ENCODE measurements at regions of chr12 and their contacts with region 1.

Region 1: GRCh38 chr12:56117778-56118687 is at the start of gene ZC3H10:
- DNase-seq: peak; percentile 89 to 100 (median 94)
- ATAC-seq: peak; percentile 67
- H3K4me3 ChIP-seq: peak within 1 kb of the TSS; percentile 73
- H3K4me3 Mint-ChIP-seq: peak within 1 kb of the TSS; percentile 97
- H3K27ac ChIP-seq: peak within 1 kb of the TSS; percentile 75 to 90
- H3K27ac Mint-ChIP-seq: peak within 1 kb of the TSS; percentile 94
- H3K4me1 ChIP-seq: peaks cover 35% of the 10 kb centered on the region
- H3K4me1 Mint-ChIP-seq: peaks cover 33% of the 10 kb centered on the region
- H3K27me3 ChIP-seq: no peaks in the 10 kb centered on the region
- H3K27me3 Mint-ChIP-seq: no peaks in the 10 kb centered on the region
- CTCF ChIP-seq: peak; percentile 52
- total RNA-seq, gene ZC3H10: 6.3 to 8.9 TPM

Region 2: GRCh38 chr12:55817346-55818139 is 300.5 kb before region 1 on chr12 and contains the starts of genes ORMDL2 and SARNP:
- CTCF ChIA-PET with region 1: no interaction called
- POLR2A ChIA-PET with region 1: interaction called, 15 read pairs
- intact Hi-C with region 1: no loop called
- DNase-seq: peak; percentile 88 to 100 (median 92)
- ATAC-seq: peak; percentile 92
- H3K4me3 ChIP-seq: peak within 1 kb of the TSS; percentile 97
- H3K4me3 Mint-ChIP-seq: no peak within 1 kb of the TSS
- H3K27ac ChIP-seq: peak within 1 kb of the TSS; percentile 71 to 87
- H3K27ac Mint-ChIP-seq: no peak within 1 kb of the TSS
- H3K4me1 ChIP-seq: peaks cover 40% of the 10 kb centered on the region
- H3K4me1 Mint-ChIP-seq: peaks cover 28% of the 10 kb centered on the region
- H3K27me3 ChIP-seq: no peaks in the 10 kb centered on the region
- H3K27me3 Mint-ChIP-seq: no peaks in the 10 kb centered on the region
- CTCF ChIP-seq: no peak
- total RNA-seq, gene ORMDL2: 13.0 to 14.9 TPM
- total RNA-seq, gene SARNP: 38.2 to 38.6 TPM

Region 3: DNA sequence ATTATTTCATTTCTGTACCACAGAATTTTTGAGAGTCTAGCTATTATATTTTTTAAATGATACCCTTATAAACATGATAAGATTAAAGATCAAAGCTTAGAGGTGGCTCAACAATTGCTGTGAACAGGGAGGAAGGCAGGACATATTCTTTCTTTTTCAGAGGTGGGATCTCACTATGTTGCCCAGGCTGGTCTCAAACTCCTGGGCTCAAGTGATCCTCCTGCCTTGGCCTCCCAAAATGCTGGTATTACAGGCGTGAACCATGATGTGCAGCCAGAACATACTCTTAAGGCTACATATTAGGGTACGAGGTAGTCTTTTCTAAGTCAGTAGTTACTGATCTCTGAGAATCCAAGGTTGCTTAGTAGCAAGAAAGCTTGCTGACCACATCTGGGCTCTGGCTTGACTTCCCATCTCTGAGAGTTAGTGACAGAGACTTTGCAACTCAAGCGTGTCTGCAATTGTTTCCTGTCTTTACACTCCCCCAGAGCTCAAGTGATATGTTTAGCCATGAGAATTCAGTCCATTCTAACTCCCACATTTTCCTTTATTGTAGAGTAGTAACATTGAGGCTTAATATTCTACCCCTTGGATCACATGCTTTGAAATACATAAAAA is 135.6 kb before region 1 on chr12:
- CTCF ChIA-PET with region 1: no interaction called
- POLR2A ChIA-PET with region 1: no interaction called
- intact Hi-C with region 1: no loop called
- DNase-seq: no peak
- ATAC-seq: no peak
- H3K4me3 ChIP-seq: no peak overlapping the region
- H3K4me3 Mint-ChIP-seq: no peak overlapping the region
- H3K27ac ChIP-seq: no peak overlapping the region
- H3K27ac Mint-ChIP-seq: no peak overlapping the region
- H3K4me1 ChIP-seq: no peaks in the 10 kb centered on the region
- H3K4me1 Mint-ChIP-seq: peaks cover 30% of the 10 kb centered on the region
- H3K27me3 ChIP-seq: no peaks in the 10 kb centered on the region
- H3K27me3 Mint-ChIP-seq: no peaks in the 10 kb centered on the region
- CTCF ChIP-seq: no peak

Region 4: GRCh38 chr12:56041552-56042429 is 76.2 kb before region 1 on chr12 and contains the start of gene RPS26:
- CTCF ChIA-PET with region 1: interaction called, 19 read pairs
- POLR2A ChIA-PET with region 1: interaction called, 29 read pairs
- intact Hi-C with region 1: loop called (anchors 2 kb)
- DNase-seq: peak; percentile 81 to 99 (median 89)
- ATAC-seq: peak; percentile 92
- H3K4me3 ChIP-seq: peak within 1 kb of the TSS; percentile 95
- H3K4me3 Mint-ChIP-seq: peak within 1 kb of the TSS; percentile 94
- H3K27ac ChIP-seq: peak within 1 kb of the TSS; percentile 88 to 90
- H3K27ac Mint-ChIP-seq: peak within 1 kb of the TSS; percentile 86
- H3K4me1 ChIP-seq: peaks cover 32% of the 10 kb centered on the region
- H3K4me1 Mint-ChIP-seq: peaks cover 51% of the 10 kb centered on the region
- H3K27me3 ChIP-seq: no peaks in the 10 kb centered on the region
- H3K27me3 Mint-ChIP-seq: no peaks in the 10 kb centered on the region
- CTCF ChIP-seq: peak; percentile 43
- total RNA-seq, gene RPS26: 118 to 126 TPM

Region 5: DNA sequence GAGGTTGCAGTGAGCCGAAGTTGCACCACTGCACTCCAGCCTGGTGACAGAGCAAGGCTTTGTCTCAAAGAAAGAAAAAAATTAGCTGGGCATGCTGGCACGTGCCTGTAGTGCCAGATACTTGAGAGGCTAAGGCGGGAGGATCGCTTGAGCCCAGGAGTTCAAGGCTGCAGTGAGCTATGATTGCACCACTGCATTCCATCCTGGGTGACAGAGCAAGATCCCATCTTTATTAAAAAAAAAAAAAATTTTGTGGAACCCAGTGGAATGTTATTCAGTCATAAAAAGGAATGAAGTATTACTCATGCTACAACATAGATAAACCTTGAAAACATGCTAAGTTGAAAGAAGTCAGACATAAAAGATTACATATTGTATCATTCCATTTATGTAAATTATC is 46.4 kb before region 1 on chr12:
- CTCF ChIA-PET with region 1: no interaction called
- POLR2A ChIA-PET with region 1: no interaction called
- intact Hi-C with region 1: no loop called
- DNase-seq: no peak
- ATAC-seq: no peak
- H3K4me3 ChIP-seq: no peak overlapping the region
- H3K4me3 Mint-ChIP-seq: no peak overlapping the region
- H3K27ac ChIP-seq: no peak overlapping the region
- H3K27ac Mint-ChIP-seq: no peak overlapping the region
- H3K4me1 ChIP-seq: no peaks in the 10 kb centered on the region
- H3K4me1 Mint-ChIP-seq: no peaks in the 10 kb centered on the region
- H3K27me3 ChIP-seq: no peaks in the 10 kb centered on the region
- H3K27me3 Mint-ChIP-seq: no peaks in the 10 kb centered on the region
- CTCF ChIP-seq: no peak

Region 6: DNA sequence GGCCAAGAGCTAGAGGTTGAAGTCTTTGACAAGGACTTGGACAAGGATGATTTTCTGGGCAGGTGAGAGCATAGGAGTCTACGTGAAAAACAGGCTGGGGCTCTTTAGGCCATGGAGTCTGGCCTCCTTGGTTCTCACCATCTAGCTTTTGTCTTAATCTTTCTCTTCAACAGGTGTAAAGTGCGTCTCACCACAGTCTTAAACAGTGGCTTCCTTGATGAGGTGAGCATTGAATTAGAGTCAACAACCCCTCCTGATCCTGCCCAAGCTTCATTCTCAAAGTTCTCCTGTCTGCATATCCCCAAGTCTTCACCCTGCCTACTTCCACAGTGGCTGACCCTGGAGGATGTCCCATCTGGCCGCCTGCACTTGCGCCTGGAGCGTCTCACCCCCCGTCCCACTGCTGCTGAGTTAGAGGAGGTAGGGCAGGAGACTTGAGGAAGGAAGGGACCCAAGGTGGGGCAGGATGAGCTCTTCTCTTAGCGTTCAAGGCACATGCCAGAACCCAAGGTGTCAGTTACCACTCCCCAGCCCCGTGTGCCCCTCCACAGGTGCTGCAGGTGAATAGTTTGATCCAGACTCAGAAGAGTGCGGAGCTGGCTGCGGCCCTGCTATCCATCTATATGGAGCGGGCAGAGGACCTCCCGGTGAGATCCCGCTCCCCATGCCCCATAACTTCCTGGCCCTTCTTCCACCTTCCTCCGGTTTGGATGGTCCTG is 20.0 kb after region 1 on chr12:
- CTCF ChIA-PET with region 1: interaction called, 3 read pairs
- POLR2A ChIA-PET with region 1: interaction called, 10 read pairs
- intact Hi-C with region 1: no loop called
- DNase-seq: no peak
- ATAC-seq: peak; percentile 55
- H3K4me3 ChIP-seq: no peak overlapping the region
- H3K4me3 Mint-ChIP-seq: peak overlapping the region; percentile 39
- H3K27ac ChIP-seq: peak overlapping the region; percentile 34 to 60
- H3K27ac Mint-ChIP-seq: peak overlapping the region; percentile 78
- H3K4me1 ChIP-seq: peaks cover 78% of the 10 kb centered on the region
- H3K4me1 Mint-ChIP-seq: peaks cover 67% of the 10 kb centered on the region
- H3K27me3 ChIP-seq: no peaks in the 10 kb centered on the region
- H3K27me3 Mint-ChIP-seq: no peaks in the 10 kb centered on the region
- CTCF ChIP-seq: no peak

Region 7: GRCh38 chr12:56258057-56258819 is 140.2 kb after region 1 on chr12 and contains the start of gene ANKRD52:
- CTCF ChIA-PET with region 1: interaction called, 5 read pairs
- POLR2A ChIA-PET with region 1: interaction called, 12 read pairs
- intact Hi-C with region 1: loop called (anchors 2 kb)
- DNase-seq: peak; percentile 59 to 94 (median 75)
- ATAC-seq: peak; percentile 94
- H3K4me3 ChIP-seq: peak within 1 kb of the TSS; percentile 96
- H3K4me3 Mint-ChIP-seq: peak within 1 kb of the TSS; percentile 98
- H3K27ac ChIP-seq: peak within 1 kb of the TSS; percentile 31 to 58
- H3K27ac Mint-ChIP-seq: peak within 1 kb of the TSS; percentile 77
- H3K4me1 ChIP-seq: peaks cover 27% of the 10 kb centered on the region
- H3K4me1 Mint-ChIP-seq: peaks cover 20% of the 10 kb centered on the region
- H3K27me3 ChIP-seq: no peaks in the 10 kb centered on the region
- H3K27me3 Mint-ChIP-seq: no peaks in the 10 kb centered on the region
- CTCF ChIP-seq: peak; percentile 26
- total RNA-seq, gene ANKRD52: 23.9 to 30.8 TPM

Region 8: GRCh38 chr12:56468216-56469006 is 350.4 kb after region 1 on chr12 and contains the start of gene SPRYD4:
- CTCF ChIA-PET with region 1: interaction called, 3 read pairs
- POLR2A ChIA-PET with region 1: interaction called, 7 read pairs
- intact Hi-C with region 1: loop called (anchors 2 kb)
- DNase-seq: peak; percentile 88 to 98 (median 93)
- ATAC-seq: peak; percentile 90
- H3K4me3 ChIP-seq: peak within 1 kb of the TSS; percentile 87
- H3K4me3 Mint-ChIP-seq: peak within 1 kb of the TSS; percentile 96
- H3K27ac ChIP-seq: peak within 1 kb of the TSS; percentile 68 to 94
- H3K27ac Mint-ChIP-seq: peak within 1 kb of the TSS; percentile 97
- H3K4me1 ChIP-seq: peaks cover 29% of the 10 kb centered on the region
- H3K4me1 Mint-ChIP-seq: peaks cover 31% of the 10 kb centered on the region
- H3K27me3 ChIP-seq: no peaks in the 10 kb centered on the region
- H3K27me3 Mint-ChIP-seq: no peaks in the 10 kb centered on the region
- CTCF ChIP-seq: peak; percentile 34
- total RNA-seq, gene SPRYD4: 7.4 to 7.9 TPM